Common myeloid progenitor, CD34-positive (primary cell): ENCODE measurements at regions of chr19 and their contacts with region 1.

Region 1: DNA sequence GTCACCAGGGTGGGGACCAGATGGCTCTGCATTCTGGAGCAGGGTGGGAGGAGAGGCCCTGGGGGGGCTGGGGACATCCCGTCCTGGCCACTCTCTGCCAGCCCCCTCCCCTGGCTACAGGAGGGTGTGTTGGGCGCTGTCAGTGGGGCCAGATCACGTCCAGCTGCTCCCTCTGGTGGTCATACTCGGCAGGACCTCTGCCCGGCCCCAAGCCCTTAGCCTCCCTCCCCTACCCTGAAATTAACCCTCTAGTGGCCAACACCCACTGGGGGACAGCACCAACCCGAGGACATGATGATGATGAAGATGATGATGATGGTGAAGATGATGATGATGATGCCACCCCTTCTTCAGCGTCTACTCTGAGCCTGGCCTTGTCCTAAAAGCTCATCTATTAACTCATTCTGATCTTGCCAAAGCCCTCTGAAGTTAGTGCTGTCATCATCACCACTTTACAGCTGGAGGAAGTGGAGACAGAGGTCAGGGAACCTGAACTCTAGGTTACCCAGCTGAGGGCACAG is 590 bp upstream of the LGI4 start:
- DNase-seq: peak; percentile 75 to 87 (median 85)
- H3K4me3 ChIP-seq: no peak overlapping the region
- H3K27ac ChIP-seq: no peak overlapping the region
- H3K4me1 ChIP-seq: peaks cover 0 to 8% (median 1%) of the 10 kb centered on the region in 4 experiments
- H3K27me3 ChIP-seq: peaks cover 0 to under 1% (median 0%) of the 10 kb centered on the region in 5 experiments

Region 2: GRCh38 chr19:35044317-35045117 is 90.9 kb before region 1 on chr19:
- CTCF ChIA-PET with region 1: interaction called, 11 read pairs
- POLR2A ChIA-PET with region 1: no interaction called
- DNase-seq: peak; percentile 65 to 76 (median 71)
- H3K4me3 ChIP-seq: no peak overlapping the region
- H3K27ac ChIP-seq: no peak overlapping the region
- H3K4me1 ChIP-seq: peaks cover 0 to 74% (median 70%) of the 10 kb centered on the region in 4 experiments
- H3K27me3 ChIP-seq: no peaks in the 10 kb centered on the region

Region 3: GRCh38 chr19:35090506-35091237 is 44.8 kb before region 1 on chr19:
- CTCF ChIA-PET with region 1: interaction called, 12 read pairs
- POLR2A ChIA-PET with region 1: no interaction called
- DNase-seq: peak; percentile 62 to 73 (median 68)
- H3K4me3 ChIP-seq: peak overlapping the region in 1 of 7 experiments; percentile 17
- H3K27ac ChIP-seq: no peak overlapping the region
- H3K4me1 ChIP-seq: peaks cover 0 to 11% (median 8%) of the 10 kb centered on the region in 4 experiments
- H3K27me3 ChIP-seq: peaks cover 0 to 2% (median 0%) of the 10 kb centered on the region in 5 experiments

Region 4: DNA sequence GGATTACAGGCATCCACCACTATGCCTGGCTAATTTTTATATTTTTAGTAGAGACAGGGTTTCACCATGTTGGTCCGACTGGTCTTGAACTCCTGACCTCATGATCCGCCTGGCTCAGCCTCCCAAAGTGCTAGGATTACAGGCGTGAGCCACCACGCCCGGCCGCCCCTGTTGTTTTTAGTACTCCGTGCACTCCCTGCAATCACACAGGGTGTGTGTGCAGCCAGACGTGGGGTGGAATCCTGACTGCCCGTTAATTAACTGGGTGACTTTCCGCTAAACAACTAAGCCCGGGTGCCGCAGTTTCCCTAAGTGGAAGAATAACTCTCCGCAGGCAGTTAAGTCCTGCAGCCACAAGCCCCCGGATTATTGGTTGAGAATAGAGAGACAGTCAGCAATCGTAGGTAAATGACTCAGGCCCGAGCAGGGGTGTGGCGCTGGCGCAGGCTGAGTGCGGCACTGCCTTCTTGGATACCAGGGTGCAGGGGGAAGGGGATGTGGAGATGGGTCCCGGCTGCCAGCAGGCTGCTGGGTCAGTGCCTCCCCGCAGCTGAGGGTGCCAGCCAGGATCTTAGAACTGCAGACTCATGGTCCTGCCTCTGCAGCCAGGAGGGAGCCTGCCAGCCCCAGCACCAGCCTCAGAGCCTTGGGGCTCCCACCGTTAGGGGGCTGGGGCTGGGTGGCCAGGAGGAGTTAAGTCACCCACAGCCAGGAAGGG is 25.9 kb before region 1 on chr19:
- CTCF ChIA-PET with region 1: interaction called, 54 read pairs
- POLR2A ChIA-PET with region 1: no interaction called
- DNase-seq: peak in 2 of 3 donors; percentile 57 to 72
- H3K4me3 ChIP-seq: no peak overlapping the region
- H3K27ac ChIP-seq: no peak overlapping the region
- H3K4me1 ChIP-seq: peaks cover 0 to 15% (median 8%) of the 10 kb centered on the region in 4 experiments
- H3K27me3 ChIP-seq: no peaks in the 10 kb centered on the region

Region 5: GRCh38 chr19:35124098-35125060 is 11.1 kb before region 1 on chr19:
- CTCF ChIA-PET with region 1: interaction called, 39 read pairs
- POLR2A ChIA-PET with region 1: interaction called, 6 read pairs
- DNase-seq: peak; percentile 78 to 84 (median 82)
- H3K4me3 ChIP-seq: peak overlapping the region in 6 of 7 experiments; percentile 19 to 82 (median 58)
- H3K27ac ChIP-seq: peak overlapping the region in 1 of 2 experiments; percentile 44
- H3K4me1 ChIP-seq: peaks cover under 1 to 37% (median 17%) of the 10 kb centered on the region in 4 experiments
- H3K27me3 ChIP-seq: no peaks in the 10 kb centered on the region

Region 6: GRCh38 chr19:35168207-35168606 is 32.8 kb after region 1 on chr19:
- CTCF ChIA-PET with region 1: no interaction called
- POLR2A ChIA-PET with region 1: no interaction called
- DNase-seq: peak in 1 of 3 donors; percentile 52
- H3K4me3 ChIP-seq: peak overlapping the region in 1 of 7 experiments; percentile 11
- H3K27ac ChIP-seq: peak overlapping the region in 1 of 2 experiments; percentile 69
- H3K4me1 ChIP-seq: peaks cover 14 to 54% (median 39%) of the 10 kb centered on the region in 4 experiments
- H3K27me3 ChIP-seq: no peaks in the 10 kb centered on the region

Region 7: GRCh38 chr19:35249848-35250711 is 114.6 kb after region 1 on chr19:
- CTCF ChIA-PET with region 1: no interaction called
- POLR2A ChIA-PET with region 1: no interaction called
- DNase-seq: no peak
- H3K4me3 ChIP-seq: peak overlapping the region in 1 of 7 experiments; percentile 89
- H3K27ac ChIP-seq: peak overlapping the region in 1 of 2 experiments; percentile 71
- H3K4me1 ChIP-seq: peaks cover 0 to 30% (median 19%) of the 10 kb centered on the region in 4 experiments
- H3K27me3 ChIP-seq: peaks cover 0 to 18% (median 6%) of the 10 kb centered on the region in 5 experiments